Naive thymus-derived CD4-positive, alpha-beta T cell (primary cell): ENCODE measurements at regions of chr17 and their contacts with region 1.

Region 1: DNA sequence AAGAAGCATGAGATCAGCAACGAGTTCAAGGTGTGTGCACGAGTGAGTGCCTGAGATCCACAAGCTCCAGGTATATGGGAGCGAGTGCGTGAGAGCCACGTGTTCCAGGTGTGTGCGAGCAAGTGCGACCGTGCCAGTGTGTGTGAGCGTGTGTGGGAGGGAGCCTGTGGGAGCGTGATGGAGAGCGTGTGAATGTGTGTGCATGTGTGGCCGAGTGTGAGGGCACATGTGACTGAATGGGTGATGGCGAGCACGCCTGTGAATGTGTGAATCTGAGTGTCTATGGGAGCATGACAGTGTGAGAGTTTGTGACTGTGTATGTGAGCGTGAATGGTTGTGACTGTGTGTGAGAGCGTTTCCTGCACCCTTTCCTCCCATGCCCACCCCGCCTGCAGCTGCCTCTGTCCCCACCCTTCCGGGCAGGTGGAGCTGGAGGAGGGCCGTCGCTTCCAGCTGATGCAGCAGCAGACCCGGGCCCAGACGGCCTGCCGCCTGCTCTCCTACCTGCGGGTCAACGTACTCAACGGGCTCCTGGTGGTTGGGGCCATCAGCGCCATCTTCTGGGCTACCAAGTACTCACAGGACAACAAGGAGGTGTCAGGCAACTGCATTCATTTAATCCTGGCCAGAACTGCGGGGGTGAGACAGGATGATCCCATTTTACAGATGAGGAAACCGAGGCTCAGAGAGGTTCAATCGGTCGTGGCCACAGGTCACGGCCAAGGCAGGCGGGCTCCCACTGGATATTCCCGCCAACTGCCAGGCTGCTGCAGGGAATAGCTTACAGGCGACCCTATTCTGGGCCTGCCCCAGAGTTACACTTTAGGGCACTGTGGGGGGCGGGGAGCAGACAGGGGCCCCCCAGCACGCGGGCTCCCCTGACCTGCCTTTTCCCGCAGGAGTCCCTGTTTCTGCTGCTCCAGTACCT is 3.7 kb downstream of the TMC8 start:
- DNase-seq: peak in 8 of 9 donors; percentile 72 to 89 (median 84)
- ATAC-seq: peak; percentile 58
- H3K4me3 ChIP-seq: peak overlapping the region; percentile 95
- H3K4me3 Mint-ChIP-seq: peak overlapping the region; percentile 81 to 99 (median 92)
- H3K27ac ChIP-seq: peak overlapping the region; percentile 77
- H3K27ac Mint-ChIP-seq: peak overlapping the region; percentile 68 to 95 (median 87)
- H3K4me1 ChIP-seq: peaks cover 56 to 66% of the 10 kb centered on the region in 2 donors
- H3K4me1 Mint-ChIP-seq: peaks cover 55 to 73% (median 66%) of the 10 kb centered on the region in 7 donors
- H3K27me3 ChIP-seq: no peaks in the 10 kb centered on the region
- H3K27me3 Mint-ChIP-seq: peaks cover 0 to 3% (median 0%) of the 10 kb centered on the region in 5 donors

Region 2: DNA sequence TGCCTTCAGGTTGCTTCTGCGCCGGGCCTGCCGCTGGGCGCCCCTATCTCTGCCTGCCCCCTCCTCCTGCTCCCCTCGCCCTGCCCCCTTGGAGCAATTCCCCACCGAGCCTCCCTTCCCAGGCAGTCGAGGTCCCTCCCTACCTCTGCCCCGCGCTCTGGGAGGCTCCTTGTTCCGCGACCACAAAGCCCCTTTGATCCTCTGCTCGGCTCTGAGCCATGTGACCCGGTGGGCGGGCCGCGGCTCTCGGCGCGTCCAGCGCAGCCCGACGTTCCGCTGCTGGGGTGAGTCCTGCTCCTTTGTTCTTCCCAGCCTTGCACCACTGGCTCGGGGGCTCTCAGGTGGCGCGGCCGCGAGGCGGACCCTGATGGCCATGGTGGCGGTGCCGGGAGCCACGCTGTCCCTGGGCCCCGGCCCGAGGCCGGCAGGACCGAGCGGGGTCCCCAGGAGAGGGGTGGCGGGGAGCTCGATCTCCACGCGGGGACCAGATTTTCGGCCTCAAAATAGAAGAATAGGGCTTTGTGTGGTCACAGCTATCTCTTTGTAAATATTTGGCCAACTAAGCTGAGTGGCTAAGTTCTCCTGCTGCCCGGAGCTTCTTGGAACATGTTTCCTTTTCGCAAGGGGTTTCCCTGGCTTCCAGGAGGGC is 682.9 kb before region 1 on chr17:
- CTCF ChIA-PET with region 1: no interaction called
- POLR2A ChIA-PET with region 1: interaction called, 9 read pairs
- intact Hi-C with region 1: loop called (anchors 5 kb)
- DNase-seq: peak in 8 of 9 donors; percentile 64 to 82 (median 74)
- ATAC-seq: peak; percentile 75
- H3K4me3 ChIP-seq: peak overlapping the region; percentile 77
- H3K4me3 Mint-ChIP-seq: peak overlapping the region; percentile 92 to 100 (median 98)
- H3K27ac ChIP-seq: peak overlapping the region; percentile 92
- H3K27ac Mint-ChIP-seq: peak overlapping the region; percentile 93 to 100 (median 98)
- H3K4me1 ChIP-seq: peaks cover 31 to 40% of the 10 kb centered on the region in 2 donors
- H3K4me1 Mint-ChIP-seq: peaks cover 31 to 73% (median 37%) of the 10 kb centered on the region in 7 donors
- H3K27me3 ChIP-seq: no peaks in the 10 kb centered on the region
- H3K27me3 Mint-ChIP-seq: no peaks in the 10 kb centered on the region

Region 3: DNA sequence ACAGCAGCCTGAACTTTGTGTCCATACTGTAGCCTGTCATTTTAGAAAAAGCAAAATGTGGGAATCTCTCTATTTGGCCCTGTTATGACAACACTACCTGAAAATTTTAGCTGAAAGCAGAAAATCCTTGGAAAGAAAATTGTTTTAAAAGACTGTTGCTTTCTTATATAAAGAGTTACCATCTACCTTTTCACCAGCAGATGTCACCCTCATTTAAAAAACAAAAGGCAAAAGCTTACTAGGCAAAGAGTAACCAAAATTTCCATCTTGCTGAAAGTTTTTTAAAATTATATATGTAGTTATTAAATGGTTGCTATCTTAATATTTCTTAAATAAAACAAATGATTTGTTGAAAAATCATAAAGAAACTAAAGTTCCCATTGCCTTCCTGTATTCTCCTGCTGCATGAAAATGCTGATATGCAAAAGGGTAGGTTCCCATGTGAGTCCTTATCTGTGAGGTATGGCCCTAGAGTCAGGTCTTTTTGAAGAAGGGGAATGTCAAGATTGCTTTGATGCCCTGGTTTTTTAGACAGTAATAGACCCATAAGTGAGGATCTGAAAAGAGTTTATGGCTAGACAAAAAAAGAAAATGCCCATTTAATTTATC is 114.8 kb before region 1 on chr17:
- CTCF ChIA-PET with region 1: no interaction called
- POLR2A ChIA-PET with region 1: no interaction called
- intact Hi-C with region 1: loop called in 1 of 2 experiments (anchors 1 kb)
- DNase-seq: peak in 5 of 9 donors; percentile 20 to 37 (median 26)
- ATAC-seq: no peak
- H3K4me3 ChIP-seq: no peak overlapping the region
- H3K4me3 Mint-ChIP-seq: peak overlapping the region in 2 of 10 donors; percentile 7 to 37
- H3K27ac ChIP-seq: no peak overlapping the region
- H3K27ac Mint-ChIP-seq: peak overlapping the region in 6 of 9 donors; percentile 1 to 89 (median 38)
- H3K4me1 ChIP-seq: peaks cover 11 to 15% of the 10 kb centered on the region in 2 donors
- H3K4me1 Mint-ChIP-seq: peaks cover 14 to 45% (median 28%) of the 10 kb centered on the region in 7 donors
- H3K27me3 ChIP-seq: no peaks in the 10 kb centered on the region
- H3K27me3 Mint-ChIP-seq: no peaks in the 10 kb centered on the region

Region 4: GRCh38 chr17:78082988-78083387 is 51.2 kb before region 1 on chr17:
- CTCF ChIA-PET with region 1: interaction called, 3 read pairs
- POLR2A ChIA-PET with region 1: interaction called, 3 read pairs
- intact Hi-C with region 1: loop called (anchors 1 to 2 kb)
- DNase-seq: no peak
- ATAC-seq: no peak
- H3K4me3 ChIP-seq: no peak overlapping the region
- H3K4me3 Mint-ChIP-seq: no peak overlapping the region
- H3K27ac ChIP-seq: no peak overlapping the region
- H3K27ac Mint-ChIP-seq: no peak overlapping the region
- H3K4me1 ChIP-seq: no peaks in the 10 kb centered on the region
- H3K4me1 Mint-ChIP-seq: peaks cover 0 to 12% (median 0%) of the 10 kb centered on the region in 7 donors
- H3K27me3 ChIP-seq: no peaks in the 10 kb centered on the region
- H3K27me3 Mint-ChIP-seq: no peaks in the 10 kb centered on the region

Region 5: DNA sequence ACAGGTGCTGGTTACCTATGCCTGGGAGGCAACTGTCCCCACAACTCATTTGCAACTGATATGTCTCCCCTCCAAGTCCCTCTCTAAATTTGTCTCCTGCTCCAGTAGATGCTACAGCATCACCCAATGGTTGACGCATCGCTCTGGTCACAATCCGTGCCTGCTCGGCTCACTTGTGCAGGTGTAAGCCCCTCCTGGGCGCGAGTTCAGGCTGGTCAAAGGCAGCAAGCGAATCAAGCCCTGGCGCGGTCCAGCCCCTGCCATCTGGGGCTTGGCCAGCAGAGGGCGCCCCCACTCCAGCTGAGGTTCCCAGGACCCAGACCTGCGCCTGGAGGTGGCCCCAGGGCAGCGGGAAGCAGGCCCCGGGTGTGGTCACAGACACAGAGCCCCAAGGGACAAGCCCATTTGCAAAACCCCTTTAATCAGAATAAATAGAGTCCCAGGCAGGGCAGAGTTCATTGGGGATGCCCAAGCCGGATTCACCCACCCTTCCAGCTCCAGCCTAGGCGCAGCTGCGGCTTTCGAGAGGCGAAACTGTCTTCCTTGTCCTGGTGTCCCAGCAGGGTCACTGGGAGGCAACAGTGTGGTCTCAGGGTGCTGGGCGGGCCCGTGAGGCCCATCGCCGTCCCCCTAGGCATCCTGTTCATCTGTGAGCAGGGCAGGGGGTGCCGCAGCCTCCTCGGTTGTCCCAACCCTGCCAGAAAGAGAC is 21.6 kb before region 1 on chr17:
- CTCF ChIA-PET with region 1: interaction called, 59 read pairs
- POLR2A ChIA-PET with region 1: interaction called, 898 read pairs
- intact Hi-C with region 1: loop called (anchors 1 kb)
- DNase-seq: peak; percentile 57 to 89 (median 73)
- ATAC-seq: peak; percentile 85
- H3K4me3 ChIP-seq: no peak overlapping the region
- H3K4me3 Mint-ChIP-seq: peak overlapping the region in 7 of 10 donors; percentile 11 to 71 (median 61)
- H3K27ac ChIP-seq: peak overlapping the region; percentile 43
- H3K27ac Mint-ChIP-seq: peak overlapping the region; percentile 65 to 95 (median 84)
- H3K4me1 ChIP-seq: peaks cover 21 to 36% of the 10 kb centered on the region in 2 donors
- H3K4me1 Mint-ChIP-seq: peaks cover 35 to 64% (median 47%) of the 10 kb centered on the region in 7 donors
- H3K27me3 ChIP-seq: no peaks in the 10 kb centered on the region
- H3K27me3 Mint-ChIP-seq: no peaks in the 10 kb centered on the region

Region 6: DNA sequence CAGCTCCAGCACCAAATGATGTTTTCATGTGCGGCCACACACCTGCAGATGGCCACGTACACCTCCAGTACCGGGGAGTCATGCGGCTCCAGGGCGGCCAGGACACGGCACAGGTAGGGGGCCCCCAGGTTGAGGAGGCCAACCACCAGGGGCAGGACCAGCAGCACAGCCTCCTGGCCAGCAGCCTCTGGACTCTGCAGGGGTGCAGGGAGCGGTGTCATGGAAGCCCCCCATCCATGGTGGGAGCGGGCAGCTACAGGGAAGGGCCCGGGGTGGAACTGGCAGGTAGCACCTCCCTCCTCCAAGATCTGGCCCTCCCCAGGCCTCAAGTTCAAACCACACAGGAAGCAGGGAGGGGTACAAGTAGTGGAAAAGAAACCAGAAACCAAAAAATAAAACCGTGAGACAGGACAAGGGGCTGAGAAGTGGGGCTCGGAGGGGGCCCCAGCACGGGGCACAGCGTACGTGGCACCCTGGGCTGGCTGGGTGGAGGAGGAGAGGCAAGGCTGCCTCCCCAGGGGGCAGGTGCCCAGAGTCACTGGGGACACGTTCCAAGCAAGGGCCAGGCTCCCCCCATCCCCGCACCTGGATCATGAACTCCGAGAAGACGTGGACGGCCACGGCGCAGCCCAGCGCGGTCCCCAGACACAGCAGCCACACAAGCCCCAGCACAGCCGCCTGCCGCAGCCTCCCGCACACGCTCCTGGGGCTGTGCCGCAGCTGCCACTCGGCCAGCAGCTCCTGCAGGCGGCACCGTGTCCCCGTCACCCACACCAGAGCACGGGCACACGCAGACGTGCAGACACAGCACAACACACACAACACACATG is 13.0 kb before region 1 on chr17:
- CTCF ChIA-PET with region 1: interaction called, 59 read pairs
- POLR2A ChIA-PET with region 1: interaction called, 898 read pairs
- intact Hi-C with region 1: loop called (anchors 1 kb)
- DNase-seq: peak in 8 of 9 donors; percentile 57 to 88 (median 79)
- ATAC-seq: peak; percentile 61
- H3K4me3 ChIP-seq: peak overlapping the region; percentile 46
- H3K4me3 Mint-ChIP-seq: peak overlapping the region; percentile 84 to 99 (median 88)
- H3K27ac ChIP-seq: peak overlapping the region; percentile 77
- H3K27ac Mint-ChIP-seq: peak overlapping the region; percentile 80 to 99 (median 92)
- H3K4me1 ChIP-seq: peaks cover 60 to 74% of the 10 kb centered on the region in 2 donors
- H3K4me1 Mint-ChIP-seq: peaks cover 30 to 68% (median 55%) of the 10 kb centered on the region in 7 donors
- H3K27me3 ChIP-seq: no peaks in the 10 kb centered on the region
- H3K27me3 Mint-ChIP-seq: no peaks in the 10 kb centered on the region

Region 7: GRCh38 chr17:78168242-78168902 is 34.1 kb after region 1 on chr17 and contains the start of gene SYNGR2:
- CTCF ChIA-PET with region 1: interaction called, 3 read pairs
- POLR2A ChIA-PET with region 1: interaction called, 13 read pairs
- intact Hi-C with region 1: loop called (anchors 1 to 5 kb)
- DNase-seq: peak; percentile 80 to 94 (median 87)
- ATAC-seq: peak; percentile 91
- H3K4me3 ChIP-seq: peak within 1 kb of the TSS; percentile 58
- H3K4me3 Mint-ChIP-seq: peak within 1 kb of the TSS; percentile 64 to 83 (median 73)
- H3K27ac ChIP-seq: peak within 1 kb of the TSS; percentile 89
- H3K27ac Mint-ChIP-seq: peak within 1 kb of the TSS; percentile 31 to 88 (median 66)
- H3K4me1 ChIP-seq: peaks cover 6 to 25% of the 10 kb centered on the region in 2 donors
- H3K4me1 Mint-ChIP-seq: peaks cover 22 to 40% (median 35%) of the 10 kb centered on the region in 7 donors
- H3K27me3 ChIP-seq: no peaks in the 10 kb centered on the region
- H3K27me3 Mint-ChIP-seq: no peaks in the 10 kb centered on the region
- total RNA-seq, gene SYNGR2: 47.6 to 109 (median 58.6) TPM